Activated naive CD4-positive, alpha-beta T cell treated with anti-CD3 and anti-CD28 coated beads, Interleukin-2, amount 10 ng/mL, durations not matched to agents 7 days and 5 days (primary cell): ENCODE measurements at regions of chr1 and their contacts with region 1.

Region 1: GRCh38 chr1:33472349-33472980 is at the start of gene ZSCAN20:
- DNase-seq: peak; percentile 92
- H3K4me3 Mint-ChIP-seq: peak within 1 kb of the TSS; percentile 82
- H3K27ac Mint-ChIP-seq: peak within 1 kb of the TSS; percentile 80
- H3K4me1 Mint-ChIP-seq: peaks cover 35% of the 10 kb centered on the region
- H3K27me3 Mint-ChIP-seq: peaks cover 9% of the 10 kb centered on the region

Region 2: DNA sequence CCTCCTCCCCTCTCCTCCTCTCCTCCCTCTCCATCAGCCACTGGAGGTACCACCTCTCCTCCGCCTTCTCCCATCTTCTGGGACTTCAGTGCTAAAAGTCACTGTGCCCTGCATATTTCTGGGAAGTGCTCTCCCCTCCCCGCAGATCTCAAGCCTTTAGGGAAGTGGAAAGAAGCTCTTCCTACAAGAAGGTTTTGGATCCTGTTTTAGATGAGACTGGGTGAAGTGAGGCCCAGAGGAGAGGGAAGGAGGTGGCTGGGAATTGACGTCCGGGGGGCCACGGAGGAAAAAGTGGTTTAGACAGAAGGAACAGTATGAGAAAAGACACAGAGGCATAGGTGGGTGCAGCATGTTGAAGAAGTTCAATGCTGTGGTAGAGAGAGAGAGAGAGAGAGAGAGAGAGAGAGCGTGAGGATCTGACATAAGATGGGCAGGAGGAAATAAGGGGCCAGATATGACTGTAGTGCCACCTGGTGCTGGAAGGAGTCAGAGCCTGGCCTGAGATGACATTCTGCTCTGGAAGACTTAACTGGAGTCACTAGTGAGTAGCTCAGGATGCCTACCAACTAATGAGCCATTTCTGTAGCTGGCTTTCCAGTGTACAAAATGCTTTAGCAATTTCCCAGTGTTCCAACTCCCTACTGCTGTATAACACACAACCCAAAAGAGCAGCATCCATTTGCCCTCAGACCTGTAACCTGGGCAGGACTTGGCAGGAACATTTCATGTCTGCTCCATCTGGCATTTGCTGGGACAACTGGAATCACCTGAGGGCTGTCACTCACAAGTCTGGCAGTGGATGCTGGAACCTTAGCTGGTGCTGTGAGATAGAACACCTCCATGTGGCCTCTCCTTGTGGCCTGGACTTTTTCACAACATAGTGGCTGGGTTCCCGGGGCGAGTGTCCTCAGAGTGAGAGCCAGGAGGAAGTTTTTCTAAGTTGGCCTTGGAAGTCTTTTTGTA is 16.6 kb before region 1 on chr1:
- CTCF ChIA-PET with region 1: interaction called, 11 read pairs
- DNase-seq: peak; percentile 69
- H3K4me3 Mint-ChIP-seq: no peak overlapping the region
- H3K27ac Mint-ChIP-seq: no peak overlapping the region
- H3K4me1 Mint-ChIP-seq: peaks cover 5% of the 10 kb centered on the region
- H3K27me3 Mint-ChIP-seq: peaks cover 39% of the 10 kb centered on the region

Region 3: DNA sequence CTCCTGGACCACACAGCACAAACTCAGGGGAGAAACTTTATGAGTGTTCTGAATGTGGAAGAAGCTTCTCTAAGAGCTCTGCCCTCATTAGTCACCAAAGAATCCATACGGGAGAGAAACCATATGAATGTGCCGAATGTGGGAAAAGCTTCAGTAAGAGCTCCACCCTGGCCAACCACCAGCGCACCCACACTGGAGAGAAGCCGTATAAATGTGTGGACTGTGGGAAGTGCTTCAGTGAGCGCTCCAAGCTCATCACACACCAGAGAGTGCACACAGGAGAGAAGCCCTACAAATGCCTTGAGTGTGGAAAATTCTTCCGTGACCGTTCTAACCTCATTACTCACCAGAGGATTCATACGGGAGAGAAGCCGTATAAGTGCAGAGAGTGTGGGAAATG is 22.5 kb after region 1 on chr1:
- CTCF ChIA-PET with region 1: no interaction called
- DNase-seq: no peak
- H3K4me3 Mint-ChIP-seq: no peak overlapping the region
- H3K27ac Mint-ChIP-seq: no peak overlapping the region
- H3K4me1 Mint-ChIP-seq: no peaks in the 10 kb centered on the region
- H3K27me3 Mint-ChIP-seq: no peaks in the 10 kb centered on the region

Region 4: DNA sequence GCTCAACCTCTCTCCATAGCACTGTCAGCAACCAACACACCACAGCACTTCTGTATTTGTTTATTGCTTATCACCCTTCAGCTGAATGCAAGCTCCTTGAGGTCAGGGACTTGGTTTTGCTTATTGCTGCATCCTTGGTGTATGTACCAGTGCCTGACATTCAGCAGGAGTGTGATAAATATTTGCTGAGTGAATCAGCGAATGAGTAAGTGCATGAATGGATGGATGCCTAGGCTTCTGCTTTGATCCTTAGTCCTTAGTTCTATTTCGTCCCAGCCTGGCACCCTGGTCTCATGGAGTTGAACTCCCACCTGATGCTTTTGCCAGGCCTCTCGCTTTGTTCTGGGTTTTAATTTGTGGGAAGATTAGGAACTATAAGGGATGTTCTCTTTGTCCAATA is 88.2 kb after region 1 on chr1:
- CTCF ChIA-PET with region 1: no interaction called
- DNase-seq: no peak
- H3K4me3 Mint-ChIP-seq: no peak overlapping the region
- H3K27ac Mint-ChIP-seq: no peak overlapping the region
- H3K4me1 Mint-ChIP-seq: no peaks in the 10 kb centered on the region
- H3K27me3 Mint-ChIP-seq: peaks cover 10% of the 10 kb centered on the region

Region 5: GRCh38 chr1:34378968-34379856 is 906.7 kb after region 1 on chr1:
- CTCF ChIA-PET with region 1: no interaction called
- DNase-seq: no peak
- H3K4me3 Mint-ChIP-seq: no peak overlapping the region
- H3K27ac Mint-ChIP-seq: no peak overlapping the region
- H3K4me1 Mint-ChIP-seq: no peaks in the 10 kb centered on the region
- H3K27me3 Mint-ChIP-seq: no peaks in the 10 kb centered on the region